ENCODE measurements at regions of chr1 and their contacts with region 1.

Region 1: GRCh38 chr1:6359216-6360116 is 34.1 kb downstream of the ACOT7 start:
- DNase-seq: peak; percentile 56
- H3K4me3 ChIP-seq: no peak overlapping the region
- H3K27ac ChIP-seq: peak overlapping the region; percentile 69 to 70
- H3K4me1 ChIP-seq: peaks cover 10% of the 10 kb centered on the region
- H3K27me3 ChIP-seq: no peaks in the 10 kb centered on the region
- CTCF ChIP-seq: no peak
- POLR2A ChIP-seq: peak; percentile 54

Region 2: GRCh38 chr1:6409053-6409452 is 49.6 kb after region 1 on chr1:
- intact Hi-C with region 1: loop called (anchors 5 kb)
- DNase-seq: no peak
- H3K4me3 ChIP-seq: no peak overlapping the region
- H3K27ac ChIP-seq: no peak overlapping the region
- H3K4me1 ChIP-seq: no peaks in the 10 kb centered on the region
- H3K27me3 ChIP-seq: no peaks in the 10 kb centered on the region
- CTCF ChIP-seq: no peak
- POLR2A ChIP-seq: no peak

Region 3: GRCh38 chr1:6602669-6603237 is 243.3 kb after region 1 on chr1 and contains the start of gene KLHL21:
- intact Hi-C with region 1: loop called (anchors 5 kb)
- DNase-seq: peak; percentile 87
- H3K4me3 ChIP-seq: peak within 1 kb of the TSS; percentile 80 to 86
- H3K27ac ChIP-seq: peak within 1 kb of the TSS; percentile 97 to 99
- H3K4me1 ChIP-seq: peaks cover 21% of the 10 kb centered on the region
- H3K27me3 ChIP-seq: no peaks in the 10 kb centered on the region
- CTCF ChIP-seq: peak in 1 of 4 experiments; percentile 1
- POLR2A ChIP-seq: peak; percentile 85
- total RNA-seq, gene KLHL21: 67.1 to 111 TPM